Aorta (tissue), 5 donors: ENCODE measurements at regions of chr13 and their contacts with region 1.

Region 1: GRCh38 chr13:95191821-95192563 is 109.3 kb downstream of the ABCC4 start:
- DNase-seq: peak; percentile 81 to 90
- ATAC-seq: peak; percentile 86
- H3K4me3 ChIP-seq: no peak overlapping the region
- H3K27ac ChIP-seq: no peak overlapping the region
- H3K4me1 ChIP-seq: no peaks in the 10 kb centered on the region
- H3K27me3 ChIP-seq: no peaks in the 10 kb centered on the region

Region 2: DNA sequence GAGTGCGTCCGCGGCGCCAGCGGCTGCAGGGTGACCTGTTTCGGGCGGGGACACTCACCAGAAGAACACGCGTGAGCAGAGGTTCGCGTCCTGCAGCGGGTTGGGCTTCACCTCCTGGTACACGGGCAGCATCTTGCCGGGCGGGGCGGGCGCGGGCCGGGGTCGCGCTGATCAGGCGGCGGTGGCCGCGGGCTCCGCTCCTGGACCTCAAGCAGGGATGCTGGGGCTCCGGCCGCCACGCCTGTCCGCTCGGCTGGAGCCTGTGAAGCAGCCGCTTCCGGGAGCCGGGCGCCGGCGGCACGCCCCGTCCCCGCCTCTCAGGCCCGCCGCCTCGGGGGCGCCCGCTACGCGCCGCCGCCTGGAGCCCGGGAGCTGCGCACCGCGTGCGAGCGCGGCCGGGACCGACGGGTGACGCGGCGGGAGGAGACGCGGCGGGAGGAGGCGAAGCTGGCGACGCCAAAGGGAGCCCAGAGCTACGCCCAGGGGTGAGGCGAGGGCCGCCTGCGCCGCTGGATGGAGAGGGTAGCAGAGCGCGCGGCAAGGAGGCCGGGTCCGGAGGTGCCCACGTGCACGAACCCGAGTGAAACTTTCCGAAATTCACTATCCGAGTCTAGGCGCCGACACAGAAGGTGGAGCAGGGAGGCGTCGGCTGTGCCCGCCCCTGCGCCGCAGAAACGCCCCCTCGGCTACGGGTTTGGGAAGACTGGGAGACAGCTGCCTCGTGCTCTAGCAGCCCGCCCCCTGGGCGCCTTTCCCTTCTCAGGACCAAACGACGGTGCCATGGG is 109.4 kb after region 1 on chr13 and contains the start of gene ABCC4:
- intact Hi-C with region 1: loop called in 1 of 2 experiments (anchors 5 kb)
- DNase-seq: peak; percentile 73 to 89
- ATAC-seq: peak; percentile 93
- H3K4me3 ChIP-seq: peak within 1 kb of the TSS; percentile 56 to 66
- H3K27ac ChIP-seq: peak within 1 kb of the TSS in 1 of 2 donors; percentile 2
- H3K4me1 ChIP-seq: no peaks in the 10 kb centered on the region
- H3K27me3 ChIP-seq: no peaks in the 10 kb centered on the region
- total RNA-seq, gene ABCC4: 11.3 to 18.6 TPM

Region 3: DNA sequence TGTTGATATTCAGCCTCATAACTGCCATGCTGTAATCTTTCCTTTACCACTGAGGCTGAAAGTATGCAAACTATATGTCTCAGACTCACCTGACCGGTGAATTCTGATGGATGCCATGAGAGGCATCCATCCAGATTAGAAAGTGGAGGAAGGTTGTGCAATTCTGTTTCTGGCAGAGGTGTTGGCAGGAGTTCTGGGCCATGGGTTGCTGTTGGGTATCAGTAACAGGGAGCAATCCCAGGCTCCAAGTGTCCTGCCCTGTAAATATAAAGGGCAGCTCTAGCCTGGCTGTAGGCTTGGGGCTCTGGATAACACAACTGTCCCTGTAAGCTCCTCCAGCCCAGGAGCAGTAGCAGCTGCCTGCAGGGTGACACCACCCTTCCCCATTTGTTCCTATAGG is 186.6 kb after region 1 on chr13:
- intact Hi-C with region 1: loop called (anchors 1 to 5 kb)
- DNase-seq: no peak
- ATAC-seq: no peak
- H3K4me3 ChIP-seq: no peak overlapping the region
- H3K27ac ChIP-seq: no peak overlapping the region
- H3K4me1 ChIP-seq: no peaks in the 10 kb centered on the region
- H3K27me3 ChIP-seq: no peaks in the 10 kb centered on the region

Region 4: GRCh38 chr13:95403828-95404522 is 212.0 kb after region 1 on chr13:
- intact Hi-C with region 1: loop called (anchors 1 to 2 kb)
- DNase-seq: peak; percentile 83 to 92
- ATAC-seq: peak; percentile 92
- H3K4me3 ChIP-seq: peak overlapping the region in 1 of 2 donors; percentile 29
- H3K27ac ChIP-seq: no peak overlapping the region
- H3K4me1 ChIP-seq: no peaks in the 10 kb centered on the region
- H3K27me3 ChIP-seq: no peaks in the 10 kb centered on the region

Region 5: GRCh38 chr13:95479731-95480130 is 287.7 kb after region 1 on chr13:
- intact Hi-C with region 1: loop called in 1 of 2 experiments (anchors 5 kb)
- DNase-seq: no peak
- ATAC-seq: no peak
- H3K4me3 ChIP-seq: no peak overlapping the region
- H3K27ac ChIP-seq: no peak overlapping the region
- H3K4me1 ChIP-seq: no peaks in the 10 kb centered on the region
- H3K27me3 ChIP-seq: no peaks in the 10 kb centered on the region